ENCODE measurements at regions of chr1 and their contacts with region 1.

Region 1: DNA sequence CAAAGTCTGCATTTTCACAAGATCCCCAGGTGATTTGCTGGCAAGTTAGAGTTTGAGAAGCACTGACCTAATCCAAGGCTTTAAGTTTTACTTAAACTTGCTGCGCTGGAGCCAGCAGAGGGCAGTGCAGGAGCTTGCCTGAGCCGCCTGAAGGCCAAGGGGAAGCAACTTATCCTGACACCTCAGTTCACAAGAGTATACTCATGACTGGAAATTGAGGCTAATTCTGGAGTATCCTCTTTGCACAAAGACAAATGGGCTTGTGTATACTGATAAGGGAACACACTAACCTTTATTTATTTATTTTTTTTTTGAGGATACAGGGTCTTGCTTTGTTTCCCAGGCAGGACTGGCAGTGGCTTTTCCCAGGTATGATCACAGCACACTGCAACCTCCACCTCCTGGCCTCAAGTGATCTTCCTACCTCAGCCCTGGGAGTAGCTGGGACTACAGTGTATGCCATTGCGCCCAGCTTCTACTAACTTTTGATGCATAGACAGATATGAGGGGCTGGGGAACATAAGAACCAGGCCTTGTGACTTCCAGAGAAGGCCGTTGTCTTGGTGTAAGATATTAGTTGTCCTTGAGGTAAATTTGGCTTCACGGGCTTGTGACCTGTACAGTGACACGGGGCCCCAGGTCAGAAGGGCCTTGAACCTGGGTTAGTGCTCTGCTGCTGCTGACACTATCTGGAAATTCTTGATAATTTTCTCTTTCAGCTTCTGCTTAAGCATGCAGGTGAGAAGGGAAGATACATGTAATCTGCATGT is 29.0 kb upstream of the SLAMF1 start:
- DNase-seq: peak; percentile 65 to 80 (median 68)
- H3K4me3 ChIP-seq: no peak overlapping the region
- H3K4me3 Mint-ChIP-seq: peak overlapping the region in 3 of 8 donors; percentile 18 to 64 (median 60)
- H3K27ac ChIP-seq: peak overlapping the region; percentile 47
- H3K27ac Mint-ChIP-seq: peak overlapping the region in 4 of 7 donors; percentile 30 to 94 (median 85)
- H3K4me1 ChIP-seq: peaks cover 49% of the 10 kb centered on the region
- H3K4me1 Mint-ChIP-seq: peaks cover 5 to 22% (median 19%) of the 10 kb centered on the region in 4 donors
- H3K27me3 ChIP-seq: no peaks in the 10 kb centered on the region
- H3K27me3 Mint-ChIP-seq: no peaks in the 10 kb centered on the region

Region 2: DNA sequence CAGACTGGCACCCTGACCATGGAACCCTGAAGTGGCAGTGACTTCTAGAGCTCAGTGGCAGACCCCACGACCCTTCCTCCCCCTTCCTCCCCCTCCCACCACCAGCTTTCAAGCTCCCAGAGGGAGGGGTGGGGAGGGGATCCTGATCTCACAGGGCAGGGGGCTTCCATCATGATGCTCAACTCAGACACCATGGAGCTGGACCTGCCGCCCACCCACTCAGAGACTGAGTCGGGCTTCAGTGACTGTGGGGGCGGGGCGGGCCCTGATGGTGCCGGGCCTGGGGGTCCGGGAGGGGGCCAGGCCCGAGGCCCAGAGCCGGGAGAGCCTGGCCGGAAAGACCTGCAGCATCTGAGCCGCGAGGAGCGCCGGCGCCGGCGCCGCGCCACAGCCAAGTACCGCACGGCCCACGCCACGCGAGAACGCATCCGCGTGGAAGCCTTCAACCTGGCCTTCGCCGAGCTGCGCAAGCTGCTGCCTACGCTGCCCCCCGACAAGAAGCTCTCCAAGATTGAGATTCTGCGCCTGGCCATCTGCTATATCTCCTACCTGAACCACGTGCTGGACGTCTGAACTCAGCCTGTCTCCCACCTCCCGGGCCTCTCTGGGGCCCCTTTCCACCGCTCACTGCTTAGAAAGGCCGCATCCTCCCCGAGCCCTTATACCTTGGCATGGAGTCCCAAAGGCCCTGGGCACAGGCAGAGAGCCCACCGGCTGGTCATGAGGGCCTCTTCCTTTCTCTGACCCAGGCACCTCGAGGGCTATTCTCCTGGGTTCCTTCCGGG is 305.1 kb before region 1 on chr1:
- CTCF ChIA-PET with region 1: no interaction called
- POLR2A ChIA-PET with region 1: no interaction called
- intact Hi-C with region 1: no loop called
- DNase-seq: no peak
- H3K4me3 ChIP-seq: no peak overlapping the region
- H3K4me3 Mint-ChIP-seq: no peak overlapping the region
- H3K27ac ChIP-seq: no peak overlapping the region
- H3K27ac Mint-ChIP-seq: no peak overlapping the region
- H3K4me1 ChIP-seq: peaks cover 7% of the 10 kb centered on the region
- H3K4me1 Mint-ChIP-seq: peaks cover 2 to 4% (median 3%) of the 10 kb centered on the region in 4 donors
- H3K27me3 ChIP-seq: no peaks in the 10 kb centered on the region
- H3K27me3 Mint-ChIP-seq: no peaks in the 10 kb centered on the region

Region 3: DNA sequence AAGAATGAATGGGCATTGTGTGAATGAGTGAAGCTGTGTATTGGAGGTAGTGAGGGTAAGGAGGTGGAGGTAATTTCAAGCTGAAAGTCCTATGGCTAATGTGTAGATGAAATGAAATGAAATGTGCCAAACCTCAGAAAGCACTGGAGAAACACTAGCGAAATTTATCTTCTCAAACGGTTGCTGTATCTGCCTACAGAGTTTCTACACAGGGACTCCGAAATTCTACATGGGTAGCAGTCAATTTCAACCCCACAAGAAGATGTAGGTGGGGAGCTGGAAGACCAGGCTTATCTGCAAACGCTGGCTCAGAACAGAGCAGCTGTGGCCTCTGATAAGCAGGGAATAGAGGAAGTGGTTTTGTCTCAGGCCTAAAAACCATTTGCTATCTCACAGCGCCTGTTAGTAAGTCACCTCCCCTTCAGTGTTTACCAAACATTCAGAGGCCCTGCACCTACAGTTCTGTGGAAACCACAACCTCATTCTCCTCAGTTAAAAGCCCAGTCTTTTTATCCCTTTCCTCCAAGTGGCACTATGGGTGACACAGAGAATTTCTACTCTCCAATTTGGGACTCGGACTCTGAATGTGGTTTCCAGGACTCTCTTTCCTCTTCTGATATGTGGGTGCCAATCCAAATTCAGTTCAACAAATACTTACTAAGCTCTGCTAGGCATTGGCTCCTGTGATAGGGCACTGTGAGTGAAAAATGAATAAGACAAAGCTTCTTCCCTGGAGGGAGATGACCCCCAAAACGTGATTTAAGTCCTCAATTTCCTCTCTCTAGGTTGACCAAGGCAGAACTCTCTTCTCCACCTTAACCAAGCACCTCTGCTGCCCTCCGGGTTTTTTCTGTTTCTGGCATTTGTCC is 135.6 kb before region 1 on chr1:
- CTCF ChIA-PET with region 1: interaction called, 8 read pairs
- POLR2A ChIA-PET with region 1: interaction called, 3 read pairs
- intact Hi-C with region 1: loop called (anchors 5 kb)
- DNase-seq: peak; percentile 72 to 83 (median 75)
- H3K4me3 ChIP-seq: peak overlapping the region in 1 of 2 donors; percentile 3
- H3K4me3 Mint-ChIP-seq: peak overlapping the region; percentile 36 to 90 (median 81)
- H3K27ac ChIP-seq: peak overlapping the region; percentile 51
- H3K27ac Mint-ChIP-seq: peak overlapping the region; percentile 87 to 94 (median 92)
- H3K4me1 ChIP-seq: peaks cover 65% of the 10 kb centered on the region
- H3K4me1 Mint-ChIP-seq: peaks cover 46 to 67% (median 55%) of the 10 kb centered on the region in 4 donors
- H3K27me3 ChIP-seq: no peaks in the 10 kb centered on the region
- H3K27me3 Mint-ChIP-seq: no peaks in the 10 kb centered on the region

Region 4: GRCh38 chr1:160618763-160619274 is 57.0 kb before region 1 on chr1:
- CTCF ChIA-PET with region 1: interaction called, 139 read pairs
- POLR2A ChIA-PET with region 1: interaction called, 48 read pairs
- intact Hi-C with region 1: loop called (anchors 1 kb)
- DNase-seq: peak; percentile 52 to 58 (median 55)
- H3K4me3 ChIP-seq: no peak overlapping the region
- H3K4me3 Mint-ChIP-seq: peak overlapping the region in 5 of 8 donors; percentile 4 to 41 (median 23)
- H3K27ac ChIP-seq: no peak overlapping the region
- H3K27ac Mint-ChIP-seq: peak overlapping the region; percentile 61 to 94 (median 84)
- H3K4me1 ChIP-seq: peaks cover 86% of the 10 kb centered on the region
- H3K4me1 Mint-ChIP-seq: peaks cover 53 to 86% (median 69%) of the 10 kb centered on the region in 4 donors
- H3K27me3 ChIP-seq: no peaks in the 10 kb centered on the region
- H3K27me3 Mint-ChIP-seq: no peaks in the 10 kb centered on the region

Region 5: DNA sequence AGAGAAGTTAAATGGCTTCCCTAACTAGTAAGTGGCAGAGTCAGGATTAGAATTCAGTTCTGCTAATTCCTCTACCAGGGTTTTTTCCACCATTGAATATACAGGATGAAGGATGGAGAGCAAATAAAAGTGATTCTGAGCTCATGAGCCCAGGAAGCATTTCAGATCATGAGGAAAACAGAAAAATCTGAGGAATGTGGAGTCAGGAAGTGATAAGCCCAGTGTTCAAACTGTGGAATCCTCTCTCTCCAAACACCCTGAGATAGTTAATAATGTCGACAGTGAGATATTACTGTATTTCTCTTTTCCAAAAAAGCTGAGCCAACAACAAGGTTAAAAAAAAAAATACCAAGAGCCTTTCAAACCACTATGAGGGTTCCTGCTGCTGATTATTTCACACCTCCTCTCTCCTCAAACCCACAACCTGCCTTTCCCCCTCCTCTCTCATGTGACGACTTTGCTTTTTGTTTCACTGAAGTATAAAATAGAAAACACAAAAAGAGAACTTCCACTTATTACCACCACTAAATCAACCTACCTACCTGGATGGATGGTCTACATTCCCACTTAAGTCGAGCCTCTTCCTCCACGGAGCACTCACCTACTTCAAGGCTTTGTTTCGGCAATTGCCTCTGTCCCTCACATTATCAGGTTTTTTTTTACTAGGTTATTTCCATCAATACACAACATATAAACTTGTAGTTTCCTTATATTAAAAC is 37.8 kb before region 1 on chr1:
- CTCF ChIA-PET with region 1: interaction called, 23 read pairs
- POLR2A ChIA-PET with region 1: interaction called, 82 read pairs
- intact Hi-C with region 1: no loop called
- DNase-seq: peak; percentile 82 to 89 (median 85)
- H3K4me3 ChIP-seq: peak overlapping the region; percentile 31 to 39
- H3K4me3 Mint-ChIP-seq: peak overlapping the region; percentile 75 to 87 (median 82)
- H3K27ac ChIP-seq: peak overlapping the region; percentile 68
- H3K27ac Mint-ChIP-seq: peak overlapping the region; percentile 87 to 99 (median 98)
- H3K4me1 ChIP-seq: peaks cover 99% of the 10 kb centered on the region
- H3K4me1 Mint-ChIP-seq: peaks cover 77 to 98% (median 88%) of the 10 kb centered on the region in 4 donors
- H3K27me3 ChIP-seq: no peaks in the 10 kb centered on the region
- H3K27me3 Mint-ChIP-seq: no peaks in the 10 kb centered on the region

Region 6: GRCh38 chr1:160664573-160665051 is 11.2 kb before region 1 on chr1:
- CTCF ChIA-PET with region 1: interaction called, 40 read pairs
- POLR2A ChIA-PET with region 1: interaction called, 57 read pairs
- intact Hi-C with region 1: no loop called
- DNase-seq: peak; percentile 63 to 76 (median 74)
- H3K4me3 ChIP-seq: peak overlapping the region in 1 of 2 donors; percentile 29
- H3K4me3 Mint-ChIP-seq: peak overlapping the region; percentile 60 to 85 (median 74)
- H3K27ac ChIP-seq: peak overlapping the region; percentile 62
- H3K27ac Mint-ChIP-seq: peak overlapping the region; percentile 79 to 97 (median 90)
- H3K4me1 ChIP-seq: peaks cover 73% of the 10 kb centered on the region
- H3K4me1 Mint-ChIP-seq: peaks cover 57 to 74% (median 64%) of the 10 kb centered on the region in 4 donors
- H3K27me3 ChIP-seq: no peaks in the 10 kb centered on the region
- H3K27me3 Mint-ChIP-seq: no peaks in the 10 kb centered on the region

Region 7: DNA sequence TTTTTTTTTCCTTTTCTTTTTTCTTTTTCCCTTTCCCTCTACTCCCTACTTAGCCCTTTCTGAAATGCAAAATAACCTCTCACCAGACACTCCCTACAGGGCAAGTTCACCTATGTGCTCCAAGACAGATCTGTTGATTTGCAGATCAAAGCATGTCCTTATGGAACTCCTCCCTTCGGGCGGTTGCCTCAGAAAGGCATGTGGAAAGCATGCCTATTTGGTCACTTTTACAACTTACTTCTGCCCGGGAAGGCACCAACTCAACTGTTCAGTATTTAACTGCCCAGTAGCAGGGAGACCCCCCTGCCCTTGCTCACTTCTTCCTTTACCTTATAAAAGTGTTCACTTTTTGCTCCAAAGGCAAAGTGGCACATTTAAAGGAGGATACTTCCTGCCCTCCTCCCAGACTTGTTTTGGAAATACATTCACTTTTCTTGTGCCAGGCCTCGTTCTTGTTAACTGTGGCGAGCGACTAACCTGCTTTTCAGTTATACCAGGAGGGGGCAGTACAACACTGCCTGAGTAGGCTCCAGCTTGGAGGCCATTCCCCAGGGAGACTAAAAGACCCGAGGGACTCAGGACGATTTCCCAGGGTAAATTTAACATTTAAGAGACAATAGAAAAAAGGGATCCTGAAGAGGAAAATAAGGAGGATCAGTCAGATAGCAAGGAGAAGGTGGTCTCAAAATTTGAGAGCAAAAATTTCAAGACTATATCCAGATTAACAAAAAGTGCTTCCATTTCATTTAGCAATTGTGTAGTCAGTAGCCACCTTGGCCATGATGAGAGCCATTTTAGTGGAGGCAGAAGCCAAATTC is 50.9 kb after region 1 on chr1:
- CTCF ChIA-PET with region 1: interaction called, 108 read pairs
- POLR2A ChIA-PET with region 1: interaction called, 3 read pairs
- intact Hi-C with region 1: loop called (anchors 1 kb)
- DNase-seq: peak; percentile 67 to 76 (median 74)
- H3K4me3 ChIP-seq: no peak overlapping the region
- H3K4me3 Mint-ChIP-seq: no peak overlapping the region
- H3K27ac ChIP-seq: no peak overlapping the region
- H3K27ac Mint-ChIP-seq: no peak overlapping the region
- H3K4me1 ChIP-seq: peaks cover 24% of the 10 kb centered on the region
- H3K4me1 Mint-ChIP-seq: peaks cover 11 to 20% (median 15%) of the 10 kb centered on the region in 4 donors
- H3K27me3 ChIP-seq: no peaks in the 10 kb centered on the region
- H3K27me3 Mint-ChIP-seq: no peaks in the 10 kb centered on the region